ENCODE measurements at regions of chr17 and their contacts with region 1.

Region 1: GRCh38 chr17:43940630-43941029 is 1.6 kb downstream of the PPY start:
- DNase-seq: no peak
- H3K4me3 ChIP-seq: no peak overlapping the region
- H3K27ac ChIP-seq: no peak overlapping the region
- H3K4me1 ChIP-seq: peaks cover 6 to 18% (median 8%) of the 10 kb centered on the region in 3 donors
- H3K27me3 ChIP-seq: peaks cover 0 to 44% (median 4%) of the 10 kb centered on the region in 4 donors
- CTCF ChIP-seq: peak in 3 of 6 experiments; percentile 12 to 18 (median 14)
- POLR2A ChIP-seq: no peak

Region 2: GRCh38 chr17:43994272-43995149 is 53.9 kb after region 1 on chr17:
- intact Hi-C with region 1: loop called (anchors 10 kb)
- DNase-seq: no peak
- H3K4me3 ChIP-seq: peak overlapping the region in 3 of 4 donors; percentile 11 to 59 (median 22)
- H3K27ac ChIP-seq: no peak overlapping the region
- H3K4me1 ChIP-seq: peaks cover 0 to 12% (median 6%) of the 10 kb centered on the region in 3 donors
- H3K27me3 ChIP-seq: peaks cover 0 to 7% (median 3%) of the 10 kb centered on the region in 4 donors
- CTCF ChIP-seq: peak; percentile 71 to 88 (median 82)
- POLR2A ChIP-seq: no peak

Measured in esophagus squamous epithelium (tissue), 5 donors.